IMR-90 (cell line): ENCODE measurements at regions of chr19 and their contacts with region 1.

Region 1: DNA sequence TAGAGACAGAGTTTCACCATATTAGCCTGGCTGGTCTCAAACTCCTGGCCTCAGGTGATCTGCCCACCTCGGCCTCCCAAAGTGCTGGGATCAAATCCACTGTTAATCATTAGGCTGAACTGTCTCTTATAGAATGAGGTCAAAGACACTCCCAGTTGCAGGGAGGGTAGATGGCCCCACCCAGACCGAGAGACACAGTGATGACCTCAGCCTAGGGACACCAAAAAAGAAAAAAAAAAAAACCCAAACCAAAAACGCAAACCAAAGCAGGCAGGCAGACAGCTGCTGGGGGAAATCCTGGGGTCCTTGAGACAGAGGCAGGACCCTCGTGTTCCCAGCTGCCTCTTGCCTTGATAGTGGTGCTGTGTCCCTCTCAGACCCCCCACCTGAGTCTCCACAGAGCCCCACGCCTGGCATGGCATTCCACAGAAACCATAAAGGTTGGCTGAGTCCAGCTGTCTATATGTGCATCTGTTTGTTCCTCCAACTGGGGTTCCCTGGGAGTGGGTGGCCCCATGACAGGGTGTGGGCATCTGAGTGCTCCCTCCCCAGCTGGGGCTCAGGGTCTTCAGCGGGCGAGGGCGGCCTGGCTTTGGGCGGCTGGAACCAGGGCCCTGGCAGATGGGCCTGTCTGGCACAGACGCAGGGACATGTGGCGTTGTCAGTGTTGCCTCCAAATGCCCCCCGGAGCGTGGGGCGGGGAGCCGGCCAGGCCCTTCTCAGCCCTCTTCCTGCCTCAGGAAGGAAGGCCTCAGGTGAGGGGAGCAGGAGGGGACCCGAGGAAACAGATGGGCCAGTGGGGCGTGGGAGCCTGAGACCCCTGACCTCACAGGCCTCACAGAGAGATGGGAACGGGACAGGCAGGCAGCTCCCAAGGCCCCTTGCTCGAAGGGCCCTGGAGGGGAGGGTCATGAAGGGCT is 5.2 kb downstream of the DAND5 start:
- DNase-seq: no peak
- ATAC-seq: no peak
- H3K4me3 ChIP-seq: no peak overlapping the region
- H3K27ac ChIP-seq: no peak overlapping the region
- H3K4me1 ChIP-seq: no peaks in the 10 kb centered on the region; the same call in 1 of the 2 replicates
- H3K27me3 ChIP-seq: no peaks in the 10 kb centered on the region
- CTCF ChIP-seq: no peak
- POLR2A ChIP-seq: no peak
- RAD21 ChIP-seq: no peak

Region 2: DNA sequence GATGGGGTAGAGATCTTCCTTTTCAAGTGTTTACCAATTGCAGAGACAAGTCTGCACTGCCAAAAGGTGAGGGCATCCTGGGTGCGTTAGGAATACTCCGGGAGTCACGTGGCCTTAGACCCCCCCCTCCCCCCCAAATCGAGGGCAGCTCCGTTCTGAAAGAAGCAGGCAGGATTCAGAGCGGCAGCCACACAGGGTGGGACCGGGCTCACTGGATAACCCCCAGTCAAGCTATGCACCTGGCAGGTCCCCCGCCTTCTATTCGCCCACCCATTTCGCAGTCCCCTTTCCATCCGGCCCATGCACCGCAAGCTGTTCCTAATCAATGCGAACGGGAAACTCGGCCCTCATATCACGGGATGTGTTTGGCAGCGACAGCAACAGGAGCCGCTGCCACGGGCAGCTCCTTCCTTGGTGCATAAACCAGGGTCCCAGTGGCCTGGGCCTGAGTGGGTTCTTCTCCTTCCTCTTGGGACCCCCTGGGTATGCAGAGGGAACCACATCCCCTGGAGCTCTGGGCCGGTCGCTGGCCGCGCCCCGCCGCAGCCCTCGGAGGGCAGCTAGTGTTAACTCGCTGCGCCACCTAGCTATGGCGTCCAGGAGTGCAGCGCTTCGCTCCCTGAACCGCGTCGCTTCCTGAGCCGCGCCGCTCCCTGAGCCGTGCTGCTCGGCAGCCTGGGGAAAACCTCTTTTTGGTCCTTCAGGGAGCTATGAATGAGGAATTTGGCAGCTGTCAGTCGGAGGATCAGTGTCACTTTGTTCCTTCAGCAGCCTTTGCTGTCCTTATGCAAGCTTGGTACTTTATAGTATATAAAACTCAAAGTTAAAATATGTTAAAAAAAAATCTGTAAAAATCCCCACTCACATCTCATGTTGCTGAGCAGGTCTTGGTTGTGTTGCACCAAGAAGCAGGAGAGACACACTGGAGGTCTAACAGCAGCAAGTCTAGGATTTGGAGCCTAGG is 86.7 kb after region 1 on chr19:
- CTCF ChIA-PET with region 1: interaction called, 22 read pairs
- POLR2A ChIA-PET with region 1: no interaction called
- dilution Hi-C with region 1: no loop called
- in situ Hi-C with region 1: no loop called
- intact Hi-C with region 1: no loop called
- DNase-seq: peak; percentile 69
- ATAC-seq: peak; percentile 88
- H3K4me3 ChIP-seq: no peak overlapping the region
- H3K27ac ChIP-seq: peak overlapping the region; percentile 8
- H3K4me1 ChIP-seq: peaks cover 42% of the 10 kb centered on the region
- H3K27me3 ChIP-seq: no peaks in the 10 kb centered on the region
- CTCF ChIP-seq: peak; percentile 96
- POLR2A ChIP-seq: no peak
- RAD21 ChIP-seq: peak; percentile 98

Region 3: DNA sequence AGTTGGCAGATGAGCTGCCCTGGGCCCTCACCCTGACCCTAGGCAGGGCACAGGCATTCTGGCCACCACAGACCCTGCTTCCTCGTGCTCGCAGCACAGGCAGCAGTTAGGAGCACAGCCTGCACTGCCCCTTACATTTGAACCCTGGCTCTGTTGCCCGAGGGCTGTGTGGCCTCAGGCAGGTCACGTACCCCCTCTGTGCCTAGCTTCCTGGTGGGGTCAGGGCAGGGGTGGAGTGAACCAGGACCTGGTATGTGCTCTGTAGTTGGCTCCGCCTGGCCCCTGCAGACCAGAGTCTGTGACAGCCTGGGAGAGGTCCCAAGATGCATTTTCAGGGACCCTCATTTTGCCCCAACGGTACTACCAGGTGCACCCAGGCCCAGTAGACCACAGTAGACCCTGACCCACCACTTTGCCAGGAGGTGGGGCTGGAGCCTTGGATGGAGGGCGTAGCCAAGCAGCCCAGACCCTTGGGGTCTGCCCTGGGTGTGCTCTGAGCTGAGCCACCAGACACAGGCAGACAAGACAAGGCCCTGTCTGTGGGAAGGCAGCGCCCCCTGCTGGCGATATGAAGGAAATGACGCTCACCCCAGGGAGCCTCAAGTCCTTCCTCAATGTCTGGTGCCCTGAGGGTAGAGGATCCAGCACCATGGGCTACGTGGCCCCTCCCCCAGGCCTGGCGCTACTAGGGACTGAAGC is 119.0 kb after region 1 on chr19:
- CTCF ChIA-PET with region 1: interaction called, 10 read pairs
- POLR2A ChIA-PET with region 1: no interaction called
- dilution Hi-C with region 1: no loop called
- in situ Hi-C with region 1: no loop called
- intact Hi-C with region 1: loop called (anchors 1 kb)
- DNase-seq: peak; percentile 78
- ATAC-seq: peak; percentile 89
- H3K4me3 ChIP-seq: no peak overlapping the region
- H3K27ac ChIP-seq: no peak overlapping the region
- H3K4me1 ChIP-seq: peaks cover 11% of the 10 kb centered on the region; the same call in 1 of the 2 replicates
- H3K27me3 ChIP-seq: no peaks in the 10 kb centered on the region
- CTCF ChIP-seq: peak; percentile 93
- POLR2A ChIP-seq: 0 out of 2 replicates have a peak, but pooled peaks have one; percentile 32
- RAD21 ChIP-seq: peak; percentile 97

Region 4: DNA sequence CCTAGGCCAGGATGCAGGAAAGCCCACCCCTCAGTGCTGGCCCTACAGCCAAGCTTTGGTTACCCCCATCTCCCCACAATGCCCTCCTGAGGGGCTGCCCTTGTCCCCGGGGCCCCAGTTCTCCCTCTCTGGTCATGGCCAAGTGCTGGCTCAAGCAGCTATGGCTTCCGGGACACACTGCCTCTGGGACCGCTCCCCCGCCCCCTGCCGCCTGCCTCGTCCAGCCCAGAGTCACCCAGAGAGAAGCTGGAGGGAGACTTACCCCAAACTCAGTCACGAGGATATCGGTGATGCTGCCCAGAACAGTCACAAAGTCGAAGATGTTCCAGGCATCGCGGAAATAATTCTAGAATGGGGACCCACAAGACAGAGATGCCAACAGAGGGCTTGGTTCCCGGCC is 270.4 kb after region 1 on chr19:
- CTCF ChIA-PET with region 1: no interaction called
- POLR2A ChIA-PET with region 1: no interaction called
- dilution Hi-C with region 1: no loop called
- in situ Hi-C with region 1: no loop called
- intact Hi-C with region 1: loop called (anchors 5 kb)
- DNase-seq: no peak
- ATAC-seq: no peak
- H3K4me3 ChIP-seq: no peak overlapping the region
- H3K27ac ChIP-seq: no peak overlapping the region
- H3K4me1 ChIP-seq: no peaks in the 10 kb centered on the region
- H3K27me3 ChIP-seq: no peaks in the 10 kb centered on the region; the same call in 1 of the 2 replicates
- CTCF ChIP-seq: no peak
- POLR2A ChIP-seq: no peak
- RAD21 ChIP-seq: no peak

Region 5: DNA sequence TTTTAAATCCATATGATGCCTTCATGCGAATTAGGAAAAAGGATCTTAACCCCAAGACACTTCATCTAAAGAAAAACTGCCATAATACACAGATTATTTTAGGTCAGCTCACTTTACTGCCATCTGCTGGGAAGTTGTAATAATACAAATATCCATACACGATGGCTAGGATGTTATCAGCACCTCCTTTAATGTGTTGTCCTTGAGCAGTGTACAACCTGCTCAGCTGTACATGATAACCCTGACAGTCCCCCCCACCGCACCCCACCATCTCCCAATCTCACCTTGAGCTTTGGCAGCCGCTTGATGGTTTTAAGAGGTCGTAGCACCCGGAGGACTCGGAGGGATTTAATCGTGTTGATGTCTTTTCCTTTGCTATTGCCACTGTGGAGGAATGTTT is 287.9 kb after region 1 on chr19:
- CTCF ChIA-PET with region 1: interaction called, 4 read pairs
- POLR2A ChIA-PET with region 1: no interaction called
- dilution Hi-C with region 1: no loop called
- in situ Hi-C with region 1: loop called (anchors 5 kb)
- intact Hi-C with region 1: loop called (anchors 1 kb)
- DNase-seq: peak; percentile 61
- ATAC-seq: peak; percentile 88
- H3K4me3 ChIP-seq: no peak overlapping the region
- H3K27ac ChIP-seq: no peak overlapping the region
- H3K4me1 ChIP-seq: peaks cover 6% of the 10 kb centered on the region
- H3K27me3 ChIP-seq: peaks cover 3% of the 10 kb centered on the region
- CTCF ChIP-seq: peak; percentile 66
- POLR2A ChIP-seq: no peak
- RAD21 ChIP-seq: peak; percentile 67

Region 6: DNA sequence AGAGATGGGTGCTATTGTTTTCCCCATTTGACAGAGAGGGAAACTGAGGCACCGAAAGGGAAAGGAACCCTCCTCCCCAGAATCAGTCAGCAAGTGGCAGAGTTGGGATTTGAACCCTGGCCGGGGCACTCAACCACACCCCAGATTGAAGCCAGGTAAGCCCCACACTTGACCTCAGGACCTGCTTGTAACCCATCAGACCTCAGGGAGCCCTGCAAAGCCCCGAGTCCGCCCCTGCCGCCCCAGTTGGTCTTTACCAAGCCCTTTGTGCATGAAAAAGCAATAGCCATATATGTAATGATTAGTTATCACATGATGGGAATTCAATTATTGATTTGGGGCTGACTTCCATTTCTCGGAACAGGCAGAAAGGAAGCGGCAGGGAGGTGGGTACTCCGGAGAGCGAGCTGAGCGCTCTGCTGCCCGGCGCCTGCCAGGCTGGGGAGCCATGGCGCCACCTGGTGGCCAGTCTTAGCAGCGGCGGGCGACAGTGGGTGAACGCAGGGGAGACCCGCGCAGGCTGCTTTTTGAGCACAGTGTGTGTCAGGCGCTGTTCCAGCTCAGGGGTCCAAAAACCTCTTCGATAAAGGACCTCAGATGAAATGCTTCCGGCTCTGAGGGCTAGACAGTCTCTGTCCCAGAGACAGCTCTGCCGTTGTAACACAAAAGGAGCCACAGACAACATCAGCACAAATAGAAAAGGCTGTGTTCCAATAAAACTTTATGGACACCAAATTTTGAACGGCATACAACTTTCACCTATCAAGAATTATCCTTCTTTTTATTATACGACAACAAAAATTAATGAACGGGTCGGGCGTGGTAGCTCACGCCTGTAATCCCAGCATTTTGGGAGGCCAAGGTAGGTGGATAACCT is 614.6 kb after region 1 on chr19:
- CTCF ChIA-PET with region 1: no interaction called
- POLR2A ChIA-PET with region 1: no interaction called
- dilution Hi-C with region 1: no loop called
- in situ Hi-C with region 1: loop called (anchors 10 kb)
- intact Hi-C with region 1: loop called (anchors 1 kb)
- DNase-seq: peak; percentile 41
- ATAC-seq: peak; percentile 100
- H3K4me3 ChIP-seq: no peak overlapping the region
- H3K27ac ChIP-seq: no peak overlapping the region
- H3K4me1 ChIP-seq: no peaks in the 10 kb centered on the region
- H3K27me3 ChIP-seq: peaks cover 5% of the 10 kb centered on the region
- CTCF ChIP-seq: peak; percentile 94
- POLR2A ChIP-seq: no peak
- RAD21 ChIP-seq: peak; percentile 88

Region 7: DNA sequence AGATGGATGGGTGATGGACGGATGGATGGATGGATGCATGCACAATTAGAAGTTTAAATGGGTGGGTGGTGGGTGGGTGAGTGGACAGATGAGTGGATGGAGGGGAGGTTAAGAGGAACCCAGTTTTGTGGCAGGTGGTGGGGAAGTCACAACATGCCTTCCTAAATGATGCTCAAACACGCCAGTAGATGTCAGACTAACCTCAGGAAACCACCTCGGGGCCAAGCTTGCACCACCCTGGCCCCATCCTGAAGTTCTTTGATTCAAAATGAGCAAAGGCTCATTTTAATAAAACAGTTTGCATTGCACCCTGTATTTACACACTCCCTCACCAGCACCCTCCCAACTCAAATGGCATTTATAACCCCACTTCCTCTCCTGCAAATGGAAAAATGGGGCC is 623.1 kb after region 1 on chr19:
- CTCF ChIA-PET with region 1: no interaction called
- POLR2A ChIA-PET with region 1: no interaction called
- dilution Hi-C with region 1: no loop called
- in situ Hi-C with region 1: loop called (anchors 10 kb)
- intact Hi-C with region 1: no loop called
- DNase-seq: peak; percentile 74
- ATAC-seq: peak; percentile 97
- H3K4me3 ChIP-seq: no peak overlapping the region
- H3K27ac ChIP-seq: no peak overlapping the region
- H3K4me1 ChIP-seq: no peaks in the 10 kb centered on the region
- H3K27me3 ChIP-seq: no peaks in the 10 kb centered on the region; the same call in 1 of the 2 replicates
- CTCF ChIP-seq: peak; percentile 83
- POLR2A ChIP-seq: 0 out of 2 replicates have a peak, but pooled peaks have one; percentile 40
- RAD21 ChIP-seq: peak; percentile 93